ENCODE measurements at regions of chr1 and their contacts with region 1.

Region 1: GRCh38 chr1:145963995-145964901 is at the starts of genes ANKRD34A and POLR3GL:
- DNase-seq: peak; percentile 92
- H3K27ac ChIP-seq: peak within 1 kb of the TSS; percentile 84
- CTCF ChIP-seq: no peak

Region 2: DNA sequence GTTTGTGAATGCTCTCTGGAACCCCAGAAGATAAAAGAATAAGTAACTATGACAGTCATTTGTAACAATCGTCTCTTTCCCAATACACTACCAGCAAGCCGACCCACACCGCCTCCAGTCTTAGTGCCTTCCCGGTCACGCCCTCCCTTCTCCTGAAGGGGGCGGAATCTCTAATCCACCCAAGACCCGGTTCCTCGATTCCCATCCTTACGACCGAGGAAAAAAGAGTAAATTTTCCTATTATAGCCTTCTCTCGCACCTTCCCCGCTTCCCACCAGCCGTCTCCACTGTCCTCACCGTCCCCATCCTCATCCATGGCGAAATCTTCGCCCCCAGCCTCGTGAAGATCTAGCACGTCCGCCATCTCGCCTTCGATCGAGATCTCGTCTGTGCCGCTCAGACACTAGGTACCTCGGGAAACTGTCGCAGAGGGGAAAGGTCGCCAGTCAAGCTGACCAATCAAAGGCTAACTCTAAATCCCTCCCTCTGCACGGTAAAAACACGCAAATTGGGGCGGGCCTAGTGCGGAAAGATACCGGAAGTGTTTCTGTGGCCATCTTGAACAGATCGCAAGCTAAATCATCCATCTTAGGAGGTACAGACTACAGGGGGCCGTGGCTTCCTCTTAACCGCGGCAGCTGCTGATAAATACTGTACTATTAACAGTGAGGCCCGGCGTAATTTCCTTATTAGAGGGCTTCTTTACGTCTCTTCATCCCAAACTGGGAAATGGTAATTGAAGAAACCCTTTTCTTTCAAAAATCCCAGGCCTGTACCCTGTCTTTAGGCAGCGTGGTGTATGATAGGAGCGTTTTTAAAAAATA is 37.0 kb before region 1 on chr1 and contains the start of gene RBM8A:
- CTCF ChIA-PET with region 1: interaction called, 4 read pairs
- POLR2A ChIA-PET with region 1: interaction called, 15 read pairs
- DNase-seq: peak; percentile 92
- H3K27ac ChIP-seq: peak within 1 kb of the TSS; percentile 82
- CTCF ChIP-seq: peak; percentile 68

Region 3: DNA sequence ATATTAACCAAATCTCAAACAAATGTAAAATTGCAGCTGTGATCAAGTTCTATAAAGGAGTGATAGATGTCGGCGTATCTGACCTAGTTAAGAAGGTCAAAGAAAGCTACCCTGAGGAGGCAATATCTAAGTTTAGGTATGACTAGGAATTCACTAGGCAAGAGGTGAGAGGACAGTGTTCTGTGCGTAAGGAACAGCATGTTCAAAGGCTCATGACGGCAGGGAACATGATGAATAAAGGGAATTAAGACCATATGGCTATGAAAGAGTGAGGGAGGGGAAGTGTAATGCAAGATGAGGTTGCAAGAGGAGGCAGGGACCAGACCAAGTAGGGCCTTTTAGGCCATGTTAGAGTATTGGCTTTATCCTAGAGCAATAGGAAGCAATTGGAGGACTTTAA is 15.0 kb before region 1 on chr1:
- CTCF ChIA-PET with region 1: no interaction called
- POLR2A ChIA-PET with region 1: no interaction called
- DNase-seq: no peak
- H3K27ac ChIP-seq: no peak overlapping the region
- CTCF ChIP-seq: no peak

Measured in RWPE1 (cell line).